BJ (cell line): ENCODE measurements at regions of chr13 and their contacts with region 1.

Region 1: DNA sequence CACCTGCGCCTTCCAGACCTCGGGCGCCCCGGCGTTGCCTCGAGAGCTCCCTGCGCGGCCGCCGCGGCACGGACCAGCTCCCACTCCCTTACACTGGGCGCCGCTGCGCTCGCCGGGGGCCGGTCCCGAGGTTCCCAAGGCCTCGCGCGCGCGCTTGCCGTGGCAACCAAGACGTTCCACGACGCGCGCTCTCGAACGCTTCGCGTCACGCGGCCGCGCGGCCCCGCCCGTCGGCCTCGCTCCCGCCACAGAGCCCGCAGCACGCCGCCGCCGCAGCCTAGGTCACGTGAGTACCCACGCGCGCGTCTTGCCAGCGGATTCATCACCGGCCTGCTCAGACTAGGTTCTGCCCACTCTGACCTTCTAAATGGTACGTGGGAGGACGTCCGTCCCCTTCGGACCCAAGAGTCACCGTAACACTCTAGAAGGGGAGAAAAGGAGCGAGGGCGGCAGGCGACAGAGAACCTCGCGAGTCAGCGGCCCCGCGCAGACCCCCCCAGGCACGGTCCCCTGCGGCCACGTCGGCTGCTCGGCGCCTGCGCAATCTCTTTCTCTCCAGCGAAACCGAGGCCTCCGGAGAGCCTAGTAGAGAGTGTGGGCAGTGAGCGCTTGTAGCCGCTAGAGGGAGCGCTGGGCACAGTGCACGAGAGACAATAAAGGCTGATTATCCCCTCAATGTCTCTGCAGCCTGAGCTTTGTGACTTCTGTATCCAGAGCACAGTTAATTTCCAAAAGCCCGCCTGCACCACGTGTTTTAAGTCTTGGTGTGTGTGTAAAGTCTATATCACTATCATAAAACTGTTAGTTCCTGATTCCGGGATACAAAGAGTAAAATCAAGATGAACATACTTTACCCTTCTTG is at the start of gene SPART:
- DNase-seq: peak; percentile 50
- H3K4me3 ChIP-seq: peak within 1 kb of the TSS; percentile 62
- H3K27me3 ChIP-seq: no peaks in the 10 kb centered on the region
- CTCF ChIP-seq: peak; percentile 98
- polyA plus RNA-seq, gene SPART: 32.7 and 58.4 TPM in 2 replicates

Region 2: DNA sequence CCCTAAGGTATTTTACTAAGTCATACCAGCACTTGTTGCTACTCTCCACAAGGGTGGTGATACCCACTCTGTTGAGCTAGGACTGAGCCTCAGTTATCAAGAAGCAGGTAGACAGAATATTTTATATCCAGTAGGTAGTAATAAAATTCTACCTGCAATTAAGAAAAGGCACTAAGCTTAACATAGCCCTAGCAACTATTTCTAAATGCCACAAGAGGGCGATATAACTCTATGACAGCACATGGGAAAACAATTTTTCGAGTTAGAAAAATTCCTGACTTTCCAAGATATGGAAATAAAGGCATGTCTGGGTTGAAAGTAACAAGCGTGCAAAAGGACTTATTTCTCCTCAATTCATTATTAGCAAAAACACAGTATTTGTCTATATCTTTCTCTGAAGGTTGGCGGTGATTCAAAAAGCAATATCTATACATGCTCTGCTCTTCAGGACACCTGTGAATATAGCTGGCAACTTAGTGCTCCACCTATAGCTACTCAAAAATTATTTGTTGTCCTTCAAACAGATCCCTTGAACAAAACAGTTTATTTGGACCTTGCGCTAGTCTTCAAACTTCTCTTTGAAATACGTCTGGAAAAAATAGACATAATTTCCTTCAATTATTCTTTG is 63.5 kb before region 1 on chr13:
- CTCF ChIA-PET with region 1: interaction called, 10 read pairs
- POLR2A ChIA-PET with region 1: no interaction called
- DNase-seq: no peak
- H3K4me3 ChIP-seq: no peak overlapping the region
- H3K27me3 ChIP-seq: no peaks in the 10 kb centered on the region
- CTCF ChIP-seq: peak; percentile 74

Region 3: GRCh38 chr13:36357692-36358091 is 11.2 kb after region 1 on chr13:
- CTCF ChIA-PET with region 1: interaction called, 17 read pairs
- POLR2A ChIA-PET with region 1: no interaction called
- DNase-seq: no peak
- H3K4me3 ChIP-seq: no peak overlapping the region
- H3K27me3 ChIP-seq: no peaks in the 10 kb centered on the region
- CTCF ChIP-seq: no peak

Region 4: GRCh38 chr13:36369268-36370107 is 23.0 kb after region 1 on chr13:
- CTCF ChIA-PET with region 1: interaction called, 13 read pairs
- POLR2A ChIA-PET with region 1: no interaction called
- DNase-seq: no peak
- H3K4me3 ChIP-seq: no peak overlapping the region
- H3K27me3 ChIP-seq: no peaks in the 10 kb centered on the region
- CTCF ChIP-seq: no peak

Region 5: DNA sequence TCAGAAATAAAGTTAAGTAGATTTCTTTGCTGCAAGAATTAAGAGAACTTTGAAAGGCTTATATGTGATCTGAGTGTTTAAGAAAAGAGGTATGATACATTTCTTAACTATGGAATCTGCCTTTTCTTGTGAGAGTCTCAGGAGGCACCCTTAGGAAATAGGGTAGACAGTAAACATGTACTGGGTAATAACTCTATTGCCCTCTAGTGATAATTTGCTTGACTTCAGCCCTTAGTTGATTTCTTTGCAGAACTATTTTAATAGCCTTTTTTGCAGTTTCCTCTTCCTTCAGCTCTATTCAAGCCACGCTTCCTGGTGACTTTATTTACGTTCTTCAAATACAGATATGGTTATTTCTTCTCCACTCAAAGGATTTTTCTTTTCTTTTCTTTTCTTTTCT is 48.8 kb after region 1 on chr13:
- CTCF ChIA-PET with region 1: interaction called, 14 read pairs
- POLR2A ChIA-PET with region 1: no interaction called
- DNase-seq: peak; percentile 20
- H3K4me3 ChIP-seq: no peak overlapping the region
- H3K27me3 ChIP-seq: no peaks in the 10 kb centered on the region
- CTCF ChIP-seq: peak; percentile 62

Region 6: DNA sequence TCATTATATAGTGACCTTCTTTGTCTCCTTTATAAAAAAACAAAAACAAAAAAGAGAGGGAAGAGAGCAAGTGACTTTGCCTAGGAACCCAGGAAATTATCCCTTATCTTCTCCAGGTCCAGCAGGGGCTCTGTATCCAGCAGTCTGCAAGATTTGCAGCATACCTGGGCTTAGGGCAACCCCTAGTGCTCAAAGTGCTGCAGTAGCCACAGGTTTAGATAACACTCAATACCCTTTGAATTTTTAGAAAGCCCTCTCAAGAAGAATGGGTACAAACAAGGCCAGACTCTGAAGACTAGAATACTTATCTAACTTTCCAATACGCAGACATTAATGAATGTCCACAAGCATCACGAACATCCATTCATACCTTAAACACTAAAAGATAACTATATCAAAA is 129.0 kb after region 1 on chr13:
- CTCF ChIA-PET with region 1: no interaction called
- POLR2A ChIA-PET with region 1: no interaction called
- DNase-seq: no peak
- H3K4me3 ChIP-seq: no peak overlapping the region
- H3K27me3 ChIP-seq: no peaks in the 10 kb centered on the region
- CTCF ChIP-seq: no peak